ENCODE measurements at regions of chr16 and their contacts with region 1.

Region 1: GRCh38 chr16:50806099-50807062 is 64.5 kb downstream of the CYLD start:
- DNase-seq: peak; percentile 72 to 86
- ATAC-seq: peak; percentile 94

Region 2: GRCh38 chr16:50458694-50459495 is 347.5 kb before region 1 on chr16:
- intact Hi-C with region 1: no loop called
- DNase-seq: no peak
- ATAC-seq: no peak

Region 3: DNA sequence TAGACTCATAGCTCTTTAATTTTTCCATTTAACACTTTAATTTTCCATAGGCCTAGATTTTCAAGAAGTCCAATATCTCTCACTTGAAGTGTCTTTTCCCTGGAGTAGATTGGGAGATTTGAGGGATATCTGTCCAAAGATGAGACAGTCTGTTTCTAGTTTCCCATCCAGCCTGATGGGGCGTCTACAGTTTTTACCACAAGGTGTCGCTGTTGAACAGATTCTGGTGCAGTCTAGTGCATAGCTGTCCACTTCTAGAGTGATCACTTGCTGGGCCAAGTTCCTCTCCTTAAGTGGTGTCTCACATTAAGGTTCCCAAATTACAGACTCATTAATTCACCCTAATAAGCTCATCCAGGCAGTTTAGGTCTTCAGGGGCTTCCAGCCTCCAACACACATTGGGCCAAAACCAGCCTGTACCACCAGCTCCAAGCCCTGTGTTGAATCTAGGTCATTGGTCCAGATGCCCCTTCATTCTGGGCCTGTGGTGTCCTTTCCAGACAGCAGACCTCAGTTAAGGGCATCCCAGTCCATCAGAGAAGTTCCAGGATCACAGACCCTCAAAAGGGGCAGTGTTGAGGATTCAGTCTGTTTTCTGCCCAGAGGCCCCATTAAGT is 134.6 kb before region 1 on chr16:
- intact Hi-C with region 1: loop called in 1 of 2 experiments (anchors 10 kb)
- DNase-seq: no peak
- ATAC-seq: peak; percentile 37

Region 4: GRCh38 chr16:51119556-51119955 is 313.2 kb after region 1 on chr16:
- intact Hi-C with region 1: no loop called
- DNase-seq: no peak
- ATAC-seq: no peak

Measured in left colon (tissue), 2 donors.